A673 (cell line): ENCODE measurements at regions of chr9 and their contacts with region 1.

Region 1: GRCh38 chr9:2014696-2015580 is at the start of gene SMARCA2:
- DNase-seq: peak; percentile 99
- H3K4me3 ChIP-seq: peak within 1 kb of the TSS; percentile 85
- H3K27ac ChIP-seq: peak within 1 kb of the TSS; percentile 84
- H3K4me1 ChIP-seq: peaks cover 12% of the 10 kb centered on the region
- H3K27me3 ChIP-seq: no peaks in the 10 kb centered on the region
- CTCF ChIP-seq: no peak
- total RNA-seq, gene SMARCA2: 59.6 and 69.0 TPM in 2 replicates

Region 2: DNA sequence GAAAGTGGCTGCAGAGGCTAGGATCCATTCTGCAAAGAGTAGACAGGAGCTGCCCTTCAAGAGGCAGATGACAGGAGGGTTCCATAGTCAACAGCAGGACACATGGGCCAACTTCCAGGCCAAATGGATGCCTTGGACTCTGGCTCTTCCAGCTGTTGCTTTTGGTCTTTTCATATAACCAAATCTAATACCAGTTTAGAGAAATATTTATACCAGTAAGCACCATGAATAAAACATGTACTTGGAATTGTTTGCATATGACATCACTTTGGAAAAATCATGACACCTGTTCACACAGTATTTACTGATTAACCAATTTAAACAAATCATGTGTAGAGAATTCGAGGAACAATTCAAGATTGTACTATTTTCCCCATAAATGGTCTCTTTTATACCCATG is 483.5 kb before region 1 on chr9:
- CTCF ChIA-PET with region 1: no interaction called
- POLR2A ChIA-PET with region 1: no interaction called
- intact Hi-C with region 1: no loop called
- DNase-seq: no peak
- H3K4me3 ChIP-seq: no peak overlapping the region
- H3K27ac ChIP-seq: no peak overlapping the region
- H3K4me1 ChIP-seq: no peaks in the 10 kb centered on the region
- H3K27me3 ChIP-seq: no peaks in the 10 kb centered on the region
- CTCF ChIP-seq: no peak

Region 3: DNA sequence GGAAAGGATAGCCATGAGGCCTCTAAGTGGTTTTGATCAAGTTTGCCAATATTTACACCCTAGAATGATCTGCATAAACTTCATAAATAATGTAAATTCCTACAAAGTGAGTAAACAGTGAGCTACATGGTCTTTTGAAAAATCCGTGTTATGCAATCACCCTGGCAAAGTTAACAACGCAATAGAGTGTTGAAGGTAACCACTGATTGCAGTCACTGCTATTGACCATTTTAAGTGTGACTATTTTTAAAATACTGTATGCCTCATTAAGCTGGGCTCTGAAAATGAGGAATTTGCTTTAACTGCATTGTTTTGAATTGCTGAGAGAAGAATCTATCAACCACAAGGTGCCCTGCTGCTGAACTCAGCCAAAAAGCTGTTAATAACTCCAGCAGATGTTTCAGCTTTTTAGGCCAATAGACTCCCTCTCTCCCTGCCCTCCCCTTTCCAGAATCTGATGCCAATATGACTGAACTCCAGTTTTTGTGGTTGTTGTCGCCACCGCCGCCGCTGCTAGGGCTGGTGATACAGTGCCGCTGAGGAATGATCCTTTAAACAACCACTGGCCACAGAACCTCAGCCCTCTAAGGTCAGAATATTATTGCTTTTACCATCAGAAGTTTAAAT is 35.1 kb before region 1 on chr9:
- CTCF ChIA-PET with region 1: no interaction called
- POLR2A ChIA-PET with region 1: no interaction called
- intact Hi-C with region 1: no loop called
- DNase-seq: no peak
- H3K4me3 ChIP-seq: no peak overlapping the region
- H3K27ac ChIP-seq: no peak overlapping the region
- H3K4me1 ChIP-seq: no peaks in the 10 kb centered on the region
- H3K27me3 ChIP-seq: no peaks in the 10 kb centered on the region
- CTCF ChIP-seq: no peak

Region 4: DNA sequence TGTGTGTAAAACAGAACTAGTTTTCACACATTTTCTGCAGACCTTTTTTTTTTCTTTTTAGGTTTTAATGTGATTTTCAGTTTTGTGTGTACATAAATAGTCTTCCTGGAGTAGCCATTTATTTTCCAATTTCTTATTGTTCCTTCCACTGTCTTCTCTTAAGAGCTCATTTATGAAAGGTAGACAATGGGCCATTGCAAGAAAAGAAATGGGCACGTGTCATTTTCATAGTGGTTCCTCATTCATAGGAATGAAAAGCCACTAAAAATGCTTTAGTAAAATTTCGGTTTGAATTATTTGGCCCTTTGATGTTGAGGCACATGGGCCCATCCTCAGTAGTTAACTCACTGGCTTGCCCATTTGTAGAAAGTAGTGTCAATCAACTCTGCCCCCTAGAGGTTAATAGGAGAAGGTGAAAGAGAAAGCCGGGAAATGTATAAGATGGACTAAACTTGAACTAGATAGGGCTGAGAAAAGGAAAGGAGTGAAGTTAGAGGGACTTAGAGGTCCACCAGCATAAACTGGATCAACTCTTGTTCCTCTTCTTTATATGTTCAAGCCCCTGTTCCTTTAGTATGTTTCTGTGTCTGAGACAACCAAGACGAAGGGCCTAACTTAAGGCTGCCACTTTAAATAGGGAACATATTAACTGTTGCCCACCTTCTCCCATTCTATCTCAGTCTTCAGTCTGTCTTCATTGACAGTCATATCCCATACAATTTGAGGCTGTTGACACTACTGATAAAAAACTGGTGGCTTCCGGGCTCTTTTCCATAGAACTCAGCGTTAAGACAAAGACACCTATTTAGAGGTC is 72.8 kb after region 1 on chr9:
- CTCF ChIA-PET with region 1: no interaction called
- POLR2A ChIA-PET with region 1: no interaction called
- intact Hi-C with region 1: loop called (anchors 5 kb)
- DNase-seq: peak; percentile 75
- H3K4me3 ChIP-seq: no peak overlapping the region
- H3K27ac ChIP-seq: no peak overlapping the region
- H3K4me1 ChIP-seq: peaks cover 8% of the 10 kb centered on the region
- H3K27me3 ChIP-seq: no peaks in the 10 kb centered on the region
- CTCF ChIP-seq: peak; percentile 87

Region 5: DNA sequence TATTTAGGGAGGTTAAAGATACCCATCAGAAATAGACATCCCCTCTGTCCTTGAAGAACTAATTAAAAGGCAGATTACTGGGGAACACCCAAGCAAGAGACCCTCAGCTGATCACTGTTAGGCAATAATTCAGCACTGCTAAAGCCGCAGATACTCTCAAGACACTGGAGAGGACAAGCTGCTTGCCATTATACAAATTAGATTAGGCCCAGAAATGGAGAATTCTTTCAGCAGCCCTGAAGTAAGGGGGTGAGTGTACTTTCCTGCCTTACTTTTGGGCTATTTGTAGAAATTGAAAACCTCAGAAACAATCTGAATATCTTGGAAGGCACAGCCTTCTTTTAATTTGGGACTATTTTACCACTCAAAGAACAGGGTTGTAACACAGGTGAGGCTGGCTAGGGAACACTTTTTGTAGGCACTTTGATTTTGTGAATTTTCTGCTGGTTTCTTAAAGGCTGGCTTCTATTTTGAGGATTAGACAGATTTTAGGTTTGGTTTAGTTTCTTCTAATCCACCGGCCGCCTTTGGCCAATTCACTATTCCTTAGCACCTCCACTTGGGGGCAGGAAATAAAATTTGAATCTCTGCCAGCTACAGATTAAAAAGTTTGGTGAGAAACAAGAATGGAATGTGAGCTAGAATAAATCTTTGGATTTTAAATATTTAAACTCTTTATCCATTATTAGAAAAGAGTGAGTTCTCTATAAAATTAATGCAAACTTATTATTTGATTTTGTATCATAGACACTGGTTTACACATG is 106.2 kb after region 1 on chr9:
- CTCF ChIA-PET with region 1: no interaction called
- POLR2A ChIA-PET with region 1: no interaction called
- intact Hi-C with region 1: loop called (anchors 5 kb)
- DNase-seq: peak; percentile 83
- H3K4me3 ChIP-seq: no peak overlapping the region
- H3K27ac ChIP-seq: peak overlapping the region; percentile 66
- H3K4me1 ChIP-seq: peaks cover 17% of the 10 kb centered on the region
- H3K27me3 ChIP-seq: no peaks in the 10 kb centered on the region
- CTCF ChIP-seq: peak; percentile 48

Region 6: DNA sequence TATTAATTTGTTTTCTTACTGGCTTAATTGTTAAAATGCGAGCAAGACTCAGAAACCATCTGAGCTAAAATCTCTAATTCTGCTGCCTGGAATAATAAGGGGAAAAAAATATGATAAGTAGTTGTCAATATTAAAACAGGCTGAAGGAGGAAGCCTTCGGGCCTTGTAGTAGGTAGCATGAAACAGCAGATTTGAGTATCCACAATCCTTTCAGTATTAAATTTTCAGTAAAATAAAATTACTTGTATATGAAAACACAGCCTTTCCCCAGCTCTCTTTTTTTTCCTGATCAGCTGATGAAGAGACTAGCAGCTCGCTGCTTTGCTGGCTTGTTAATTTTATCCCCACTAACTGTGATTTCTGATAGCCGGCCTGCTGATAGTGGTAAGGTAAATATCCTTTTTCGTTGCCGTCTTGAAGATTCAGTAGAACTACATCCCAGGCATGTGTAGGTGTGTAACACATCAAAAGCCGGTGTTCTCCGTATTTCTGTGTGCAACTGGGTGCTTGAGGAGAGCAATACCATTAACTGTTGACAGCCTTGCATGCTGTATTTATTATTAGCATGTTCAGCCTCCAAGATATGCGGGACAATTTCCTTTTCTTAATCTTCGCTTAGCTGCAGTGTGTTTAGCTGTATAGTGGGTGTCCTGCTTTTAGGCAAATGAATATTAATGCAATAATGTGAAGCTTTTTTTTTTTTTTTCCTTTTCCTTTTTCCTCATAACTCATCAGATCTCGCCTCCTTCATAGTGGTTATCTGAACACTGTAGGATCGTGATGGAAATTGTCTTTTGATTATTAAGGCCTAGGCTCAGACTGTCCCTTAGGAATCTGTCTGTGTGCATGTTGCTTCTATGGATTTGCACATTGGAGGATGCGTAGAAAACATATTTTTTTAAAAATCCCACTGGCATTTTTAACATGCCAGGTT is 144.8 kb after region 1 on chr9:
- CTCF ChIA-PET with region 1: no interaction called
- POLR2A ChIA-PET with region 1: no interaction called
- intact Hi-C with region 1: loop called (anchors 1 kb)
- DNase-seq: peak; percentile 59
- H3K4me3 ChIP-seq: peak overlapping the region; percentile 42
- H3K27ac ChIP-seq: peak overlapping the region; percentile 81
- H3K4me1 ChIP-seq: peaks cover 35% of the 10 kb centered on the region
- H3K27me3 ChIP-seq: no peaks in the 10 kb centered on the region
- CTCF ChIP-seq: no peak

Region 7: GRCh38 chr9:2181792-2182191 is 166.9 kb after region 1 on chr9:
- CTCF ChIA-PET with region 1: no interaction called
- POLR2A ChIA-PET with region 1: no interaction called
- intact Hi-C with region 1: loop called (anchors 10 kb)
- DNase-seq: peak; percentile 75
- H3K4me3 ChIP-seq: no peak overlapping the region
- H3K27ac ChIP-seq: no peak overlapping the region
- H3K4me1 ChIP-seq: peaks cover 13% of the 10 kb centered on the region
- H3K27me3 ChIP-seq: no peaks in the 10 kb centered on the region
- CTCF ChIP-seq: peak; percentile 84

Region 8: GRCh38 chr9:2216591-2216990 is 201.7 kb after region 1 on chr9:
- CTCF ChIA-PET with region 1: no interaction called
- POLR2A ChIA-PET with region 1: no interaction called
- intact Hi-C with region 1: loop called (anchors 10 kb)
- DNase-seq: no peak
- H3K4me3 ChIP-seq: no peak overlapping the region
- H3K27ac ChIP-seq: no peak overlapping the region
- H3K4me1 ChIP-seq: peaks cover 34% of the 10 kb centered on the region
- H3K27me3 ChIP-seq: no peaks in the 10 kb centered on the region
- CTCF ChIP-seq: no peak